ENCODE measurements at regions of chr1 and their contacts with region 1.

Region 1: DNA sequence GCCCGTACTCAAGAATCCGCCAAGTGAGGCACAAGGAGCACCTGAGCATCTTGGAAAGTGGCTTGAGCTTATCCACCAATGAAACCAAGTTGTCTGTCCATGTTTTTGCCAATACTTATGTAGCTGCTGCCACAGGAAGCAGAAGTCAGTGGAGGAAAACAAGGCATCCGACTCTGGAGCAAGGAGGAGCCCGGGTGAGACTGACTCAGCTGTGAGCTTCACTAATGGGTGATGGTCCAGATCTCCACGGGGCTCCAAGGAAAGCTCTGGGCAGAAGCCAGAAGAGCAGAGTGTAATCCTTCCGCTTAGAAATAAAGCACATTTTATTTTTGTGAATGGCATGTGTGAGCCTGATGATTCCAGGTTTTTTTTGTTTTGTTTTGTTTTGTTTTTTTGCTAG is 12.3 kb upstream of the SSR2 start:
- DNase-seq: no peak
- H3K4me3 ChIP-seq: no peak overlapping the region
- H3K27ac ChIP-seq: no peak overlapping the region
- H3K4me1 ChIP-seq: no peaks in the 10 kb centered on the region; a peak in 3 of 7 replicates
- H3K27me3 ChIP-seq: no peaks in the 10 kb centered on the region
- CTCF ChIP-seq: no peak
- EP300 ChIP-seq: no peak
- POLR2A ChIP-seq: no peak
- RAD21 ChIP-seq: no peak

Region 2: GRCh38 chr1:156045076-156045475 is 12.1 kb after region 1 on chr1:
- CTCF ChIA-PET with region 1: interaction called, 30 read pairs
- POLR2A ChIA-PET with region 1: interaction called, 11 read pairs
- DNase-seq: no peak
- H3K4me3 ChIP-seq: no peak overlapping the region
- H3K27ac ChIP-seq: no peak overlapping the region
- H3K4me1 ChIP-seq: no peaks in the 10 kb centered on the region
- H3K27me3 ChIP-seq: no peaks in the 10 kb centered on the region
- CTCF ChIP-seq: no peak
- EP300 ChIP-seq: no peak
- POLR2A ChIP-seq: no peak
- RAD21 ChIP-seq: no peak

Measured in H1 (cell line).